ENCODE measurements at regions of chr9 and their contacts with region 1.

Region 1: GRCh38 chr9:2620919-2621679 is 488 bp upstream of the VLDLR start:
- DNase-seq: peak; percentile 87
- ATAC-seq: peak; percentile 88
- H3K4me3 ChIP-seq: peak overlapping the region; percentile 79
- H3K27ac ChIP-seq: peak overlapping the region; percentile 70
- H3K4me1 ChIP-seq: peaks cover 2% of the 10 kb centered on the region; the same call in 1 of the 2 replicates
- H3K27me3 ChIP-seq: no peaks in the 10 kb centered on the region
- CTCF ChIP-seq: peak; percentile 30
- POLR2A ChIP-seq: peak; percentile 64
- RAD21 ChIP-seq: peak; percentile 42

Region 2: GRCh38 chr9:2014696-2015580 is 606.2 kb before region 1 on chr9 and contains the start of gene SMARCA2:
- CTCF ChIA-PET with region 1: no interaction called
- POLR2A ChIA-PET with region 1: no interaction called
- dilution Hi-C with region 1: no loop called
- in situ Hi-C with region 1: no loop called
- intact Hi-C with region 1: loop called (anchors 5 kb)
- DNase-seq: peak; percentile 96
- ATAC-seq: peak; percentile 90
- H3K4me3 ChIP-seq: peak within 1 kb of the TSS; percentile 86
- H3K27ac ChIP-seq: peak within 1 kb of the TSS; percentile 70
- H3K4me1 ChIP-seq: peaks cover 2% of the 10 kb centered on the region
- H3K27me3 ChIP-seq: no peaks in the 10 kb centered on the region
- CTCF ChIP-seq: no peak
- POLR2A ChIP-seq: peak; percentile 57
- RAD21 ChIP-seq: no peak
- total RNA-seq, gene SMARCA2: 26.7 and 29.2 TPM in 2 replicates

Region 3: DNA sequence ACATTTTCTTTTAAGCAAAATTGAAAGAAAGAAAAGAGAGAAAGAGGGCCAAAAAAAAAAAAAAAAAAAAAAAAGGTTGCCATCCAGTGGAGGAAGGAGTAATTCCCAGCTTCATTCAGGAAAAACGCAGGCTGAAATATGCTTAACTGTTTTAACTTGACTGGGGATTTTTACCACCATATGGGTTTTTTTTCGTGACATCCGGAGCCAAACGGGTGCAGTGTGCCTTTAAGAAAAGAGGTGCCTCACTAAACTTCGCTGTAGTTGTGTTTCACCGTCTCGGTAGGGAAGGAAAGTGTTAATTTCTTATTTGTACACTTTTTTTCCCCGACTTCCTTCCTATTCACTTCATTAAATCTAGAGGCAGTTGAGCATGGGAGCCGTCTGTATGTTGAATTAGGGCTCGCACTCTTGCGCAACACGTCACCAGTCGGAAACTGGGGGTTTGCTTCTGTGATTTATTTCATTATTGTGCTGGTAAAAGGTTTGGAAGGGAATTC is 462.9 kb before region 1 on chr9:
- CTCF ChIA-PET with region 1: no interaction called
- POLR2A ChIA-PET with region 1: no interaction called
- dilution Hi-C with region 1: no loop called
- in situ Hi-C with region 1: no loop called
- intact Hi-C with region 1: loop called (anchors 2 kb)
- DNase-seq: peak; percentile 67
- ATAC-seq: peak; percentile 54
- H3K4me3 ChIP-seq: peak overlapping the region; percentile 41
- H3K27ac ChIP-seq: peak overlapping the region; percentile 79
- H3K4me1 ChIP-seq: peaks cover 5% of the 10 kb centered on the region; the same call in 1 of the 2 replicates
- H3K27me3 ChIP-seq: no peaks in the 10 kb centered on the region
- CTCF ChIP-seq: peak; percentile 23; the same call in 1 of the 2 replicates
- POLR2A ChIP-seq: no peak
- RAD21 ChIP-seq: no peak

Region 4: GRCh38 chr9:2477755-2478154 is 143.3 kb before region 1 on chr9:
- CTCF ChIA-PET with region 1: no interaction called
- POLR2A ChIA-PET with region 1: no interaction called
- dilution Hi-C with region 1: no loop called
- in situ Hi-C with region 1: no loop called
- intact Hi-C with region 1: loop called (anchors 5 kb)
- DNase-seq: peak; percentile 43
- ATAC-seq: peak; percentile 84
- H3K4me3 ChIP-seq: no peak overlapping the region
- H3K27ac ChIP-seq: no peak overlapping the region
- H3K4me1 ChIP-seq: no peaks in the 10 kb centered on the region
- H3K27me3 ChIP-seq: no peaks in the 10 kb centered on the region
- CTCF ChIP-seq: no peak
- POLR2A ChIP-seq: no peak
- RAD21 ChIP-seq: no peak

Region 5: GRCh38 chr9:2559212-2560152 is 61.6 kb before region 1 on chr9:
- CTCF ChIA-PET with region 1: no interaction called
- POLR2A ChIA-PET with region 1: no interaction called
- dilution Hi-C with region 1: no loop called
- in situ Hi-C with region 1: no loop called
- intact Hi-C with region 1: loop called (anchors 2 kb)
- DNase-seq: peak; percentile 95
- ATAC-seq: peak; percentile 98
- H3K4me3 ChIP-seq: no peak overlapping the region
- H3K27ac ChIP-seq: peak overlapping the region; percentile 93
- H3K4me1 ChIP-seq: peaks cover 12% of the 10 kb centered on the region
- H3K27me3 ChIP-seq: no peaks in the 10 kb centered on the region
- CTCF ChIP-seq: no peak
- POLR2A ChIP-seq: no peak
- RAD21 ChIP-seq: no peak

Region 6: DNA sequence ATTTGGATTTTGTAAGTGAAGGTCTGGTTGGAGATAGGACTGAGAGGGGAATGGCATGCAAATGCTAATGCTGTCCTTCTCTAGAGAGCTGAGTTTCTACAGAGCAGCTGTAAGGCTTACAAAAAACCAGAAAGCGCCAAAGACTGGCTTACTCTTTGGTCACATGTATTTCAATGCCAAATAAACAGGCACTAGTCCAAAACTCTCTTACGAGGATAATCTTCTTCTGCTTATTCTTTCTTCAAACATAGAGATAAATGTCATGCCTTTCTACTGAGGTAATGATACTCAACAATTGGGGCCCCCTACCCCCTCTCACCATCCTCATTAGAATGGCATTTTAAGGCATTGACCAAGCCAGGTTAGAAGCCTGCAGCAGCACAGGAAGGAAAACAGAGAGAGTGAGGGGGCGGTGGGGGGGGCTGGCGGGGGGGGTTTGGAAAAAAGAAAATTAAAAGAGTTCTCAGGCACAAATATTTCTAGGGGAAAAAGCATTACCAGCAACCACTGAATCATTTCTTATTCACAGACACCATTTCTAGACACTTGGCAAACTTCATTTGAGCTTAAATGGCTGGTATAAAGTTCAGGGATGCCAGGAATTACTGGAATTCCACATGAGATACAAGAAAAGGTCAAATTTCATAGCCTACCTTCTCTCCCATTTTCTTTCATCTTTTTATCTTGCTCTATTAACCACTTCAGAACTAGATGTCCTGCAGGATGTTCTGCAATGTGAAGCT is 188.8 kb after region 1 on chr9:
- CTCF ChIA-PET with region 1: no interaction called
- POLR2A ChIA-PET with region 1: no interaction called
- dilution Hi-C with region 1: no loop called
- in situ Hi-C with region 1: no loop called
- intact Hi-C with region 1: loop called (anchors 2 kb)
- DNase-seq: peak; percentile 99
- ATAC-seq: peak; percentile 93
- H3K4me3 ChIP-seq: no peak overlapping the region
- H3K27ac ChIP-seq: peak overlapping the region; percentile 100; the same call in 1 of the 2 replicates
- H3K4me1 ChIP-seq: peaks cover 20% of the 10 kb centered on the region
- H3K27me3 ChIP-seq: no peaks in the 10 kb centered on the region
- CTCF ChIP-seq: no peak
- POLR2A ChIP-seq: peak; percentile 56
- RAD21 ChIP-seq: no peak